Dendritic cell treated with granulocyte-macrophage colony-stimulating factor and Interleukin-4, amounts not matched to agents 40 ng/mL and 50 ng/mL, for 4 days (primary cell): ENCODE measurements at regions of chrX and their contacts with region 1.

Region 1: GRCh38 chrX:47523297-47523696 is 37.7 kb upstream of the ARAF start:
- H3K4me3 Mint-ChIP-seq: peak overlapping the region; percentile 65
- H3K27ac Mint-ChIP-seq: no peak overlapping the region
- H3K4me1 Mint-ChIP-seq: peaks cover 3% of the 10 kb centered on the region
- H3K27me3 Mint-ChIP-seq: peaks cover 10% of the 10 kb centered on the region

Region 2: GRCh38 chrX:47384502-47384901 is 138.8 kb before region 1 on chrX:
- intact Hi-C with region 1: loop called (anchors 5 kb)
- H3K4me3 Mint-ChIP-seq: no peak overlapping the region
- H3K27ac Mint-ChIP-seq: no peak overlapping the region
- H3K4me1 Mint-ChIP-seq: peaks cover 9% of the 10 kb centered on the region
- H3K27me3 Mint-ChIP-seq: peaks cover 3% of the 10 kb centered on the region

Region 3: DNA sequence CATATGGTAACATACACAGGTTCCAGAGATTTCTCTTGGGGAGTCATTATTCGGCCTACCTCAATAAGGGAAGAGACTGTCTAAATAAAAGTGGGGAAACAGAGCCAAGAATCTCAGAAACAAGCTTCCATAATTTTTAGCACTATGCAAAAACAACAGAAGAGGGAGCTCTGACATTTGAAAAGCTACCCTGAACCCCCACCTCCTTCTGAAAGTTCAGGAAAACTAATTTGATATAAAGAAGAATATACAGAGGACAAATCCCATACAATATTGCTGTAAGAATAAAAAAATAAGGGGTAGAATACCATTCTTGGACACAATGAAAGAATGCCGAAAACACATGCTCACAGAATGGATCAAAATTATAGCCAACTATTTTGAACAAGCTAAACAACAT is 26.0 kb before region 1 on chrX:
- intact Hi-C with region 1: loop called (anchors 1 kb)
- H3K4me3 Mint-ChIP-seq: no peak overlapping the region
- H3K27ac Mint-ChIP-seq: no peak overlapping the region
- H3K4me1 Mint-ChIP-seq: peaks cover 11% of the 10 kb centered on the region
- H3K27me3 Mint-ChIP-seq: peaks cover 1% of the 10 kb centered on the region